ENCODE measurements at regions of chr6 and their contacts with region 1.

Region 1: DNA sequence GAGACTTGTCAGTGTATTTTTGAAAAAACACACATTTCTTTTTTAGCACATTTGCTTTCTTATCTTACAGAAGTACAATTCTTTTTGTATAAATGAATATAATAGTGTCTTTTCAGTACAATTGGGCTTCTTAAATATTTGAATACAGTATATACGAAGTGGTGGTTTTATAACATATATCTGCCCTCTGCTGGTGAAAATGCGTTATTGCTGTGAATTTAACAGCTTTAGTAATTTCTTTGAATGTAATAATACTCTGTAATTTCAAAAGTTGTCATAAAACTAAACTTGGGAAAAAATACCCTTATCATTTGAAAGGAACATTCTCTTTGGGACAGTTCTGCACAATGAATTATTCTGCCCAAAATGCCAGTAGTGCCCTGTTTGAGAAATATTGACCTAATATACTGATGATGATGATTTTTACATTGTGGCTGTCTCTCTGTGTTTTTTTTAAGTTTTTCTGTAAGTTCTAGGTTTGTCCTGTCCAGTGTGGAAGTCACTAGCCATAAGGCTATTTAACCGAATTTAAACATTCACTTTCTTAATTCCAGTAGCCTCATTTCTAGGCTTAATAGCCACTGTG is 19.0 kb downstream of the SMAP1 start:
- DNase-seq: peak; percentile 15 to 49 (median 20)
- ATAC-seq: peak; percentile 75
- H3K4me3 ChIP-seq: no peak overlapping the region
- H3K27ac ChIP-seq: no peak overlapping the region
- H3K4me1 ChIP-seq: no peaks in the 10 kb centered on the region
- H3K27me3 ChIP-seq: no peaks in the 10 kb centered on the region
- CTCF ChIP-seq: peak; percentile 31 to 81 (median 36); a peak in 3 of 6 replicates
- EP300 ChIP-seq: no peak
- POLR2A ChIP-seq: no peak
- RAD21 ChIP-seq: peak; percentile 76 to 83

Region 2: GRCh38 chr6:70310063-70310694 is 376.5 kb before region 1 on chr6:
- CTCF ChIA-PET with region 1: interaction called, 3 read pairs
- POLR2A ChIA-PET with region 1: no interaction called
- in situ Hi-C with region 1: loop called (anchors 10 kb)
- intact Hi-C with region 1: loop called (anchors 5 kb)
- DNase-seq: peak in 3 of 4 experiments; percentile 14 to 66 (median 20)
- ATAC-seq: peak; percentile 73
- H3K4me3 ChIP-seq: no peak overlapping the region
- H3K27ac ChIP-seq: no peak overlapping the region
- H3K4me1 ChIP-seq: no peaks in the 10 kb centered on the region; a peak in 1 of 5 replicates
- H3K27me3 ChIP-seq: peaks cover 0 to 8% of the 10 kb centered on the region in 2 experiments; a peak in 2 of 5 replicates
- CTCF ChIP-seq: peak; percentile 54 to 90 (median 70); a peak in 5 of 6 replicates
- EP300 ChIP-seq: no peak
- POLR2A ChIP-seq: no peak
- RAD21 ChIP-seq: peak; percentile 93 to 97

Region 3: DNA sequence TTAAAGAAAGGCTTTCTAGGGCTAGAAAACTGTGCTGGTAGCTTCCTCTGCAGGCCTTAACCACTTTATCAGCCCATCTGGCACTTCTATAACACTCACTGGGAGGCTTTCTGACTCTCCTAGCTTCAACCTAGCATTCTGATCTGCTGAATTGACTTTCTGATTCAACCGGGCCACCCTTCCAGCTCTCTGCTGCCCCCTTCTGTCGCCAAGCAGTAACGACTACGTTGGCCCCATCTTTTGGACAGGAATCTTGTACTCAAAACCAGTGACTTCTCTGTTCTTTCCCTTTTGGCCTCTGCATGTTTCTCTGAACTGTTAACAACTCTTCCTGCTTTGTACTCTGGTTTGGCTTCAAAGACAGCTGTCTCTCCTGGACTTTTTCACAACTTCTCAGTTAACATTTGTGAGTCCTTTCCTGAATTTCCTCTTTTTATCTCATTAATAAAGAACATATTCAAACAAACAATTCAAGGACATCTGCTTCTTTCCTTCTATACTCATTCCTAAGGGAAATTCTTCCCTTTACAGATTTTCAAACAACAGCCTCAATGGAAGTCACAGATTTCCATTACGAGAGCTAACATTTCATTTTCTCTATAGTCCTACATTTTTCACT is 317.2 kb before region 1 on chr6:
- CTCF ChIA-PET with region 1: no interaction called
- POLR2A ChIA-PET with region 1: no interaction called
- in situ Hi-C with region 1: no loop called
- intact Hi-C with region 1: loop called (anchors 5 kb)
- DNase-seq: peak; percentile 76 to 84 (median 77)
- ATAC-seq: peak; percentile 93
- H3K4me3 ChIP-seq: no peak overlapping the region
- H3K27ac ChIP-seq: no peak overlapping the region
- H3K4me1 ChIP-seq: peaks cover 0 to 2% of the 10 kb centered on the region in 2 experiments; a peak in 1 of 5 replicates
- H3K27me3 ChIP-seq: peaks cover 6% of the 10 kb centered on the region in 2 experiments; a peak in 2 of 5 replicates
- CTCF ChIP-seq: peak; percentile 94 to 98 (median 94)
- EP300 ChIP-seq: no peak
- POLR2A ChIP-seq: no peak
- RAD21 ChIP-seq: peak; percentile 96 to 98

Region 4: DNA sequence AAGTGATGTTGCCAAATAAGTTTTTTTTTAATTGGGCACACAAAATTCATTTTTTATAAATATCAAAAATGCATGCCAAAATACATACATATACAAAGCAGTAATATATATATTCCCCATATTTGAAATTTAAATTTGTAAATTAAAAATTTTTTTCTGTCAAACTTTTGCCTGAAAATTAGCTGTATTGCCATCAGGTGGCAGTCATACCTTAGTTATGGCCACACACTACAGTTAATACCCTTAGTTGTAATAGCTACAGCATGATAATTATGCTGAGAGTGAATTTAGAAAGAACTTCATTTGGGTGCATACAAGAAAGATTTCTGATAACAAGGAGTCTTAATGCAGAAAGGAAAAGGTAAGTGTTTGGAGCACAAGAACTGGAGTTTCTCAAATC is 166.1 kb before region 1 on chr6:
- CTCF ChIA-PET with region 1: interaction called, 3 read pairs
- POLR2A ChIA-PET with region 1: no interaction called
- in situ Hi-C with region 1: no loop called
- intact Hi-C with region 1: loop called (anchors 1 kb)
- DNase-seq: peak in 3 of 4 experiments; percentile 7 to 17 (median 9)
- ATAC-seq: peak; percentile 69
- H3K4me3 ChIP-seq: no peak overlapping the region
- H3K27ac ChIP-seq: no peak overlapping the region
- H3K4me1 ChIP-seq: no peaks in the 10 kb centered on the region
- H3K27me3 ChIP-seq: no peaks in the 10 kb centered on the region
- CTCF ChIP-seq: peak; percentile 22 to 62 (median 31); a peak in 4 of 6 replicates
- EP300 ChIP-seq: no peak
- POLR2A ChIP-seq: no peak
- RAD21 ChIP-seq: peak; percentile 71 to 76

Region 5: GRCh38 chr6:70547313-70547712 is 139.3 kb before region 1 on chr6:
- CTCF ChIA-PET with region 1: interaction called, 8 read pairs
- POLR2A ChIA-PET with region 1: no interaction called
- in situ Hi-C with region 1: no loop called
- intact Hi-C with region 1: loop called (anchors 1 kb)
- DNase-seq: no peak
- ATAC-seq: peak; percentile 72
- H3K4me3 ChIP-seq: no peak overlapping the region
- H3K27ac ChIP-seq: no peak overlapping the region
- H3K4me1 ChIP-seq: no peaks in the 10 kb centered on the region
- H3K27me3 ChIP-seq: no peaks in the 10 kb centered on the region
- CTCF ChIP-seq: peak; percentile 23 to 51 (median 30); a peak in 3 of 6 replicates
- EP300 ChIP-seq: no peak
- POLR2A ChIP-seq: no peak
- RAD21 ChIP-seq: peak; percentile 50 to 53